B cell (primary cell): ENCODE measurements at regions of chr2 and their contacts with region 1.

Region 1: GRCh38 chr2:180334514-180334913 is 327.4 kb upstream of the CWC22 start:
- DNase-seq: peak; percentile 58
- ATAC-seq: peak; percentile 93
- H3K4me3 ChIP-seq: no peak overlapping the region
- H3K4me3 Mint-ChIP-seq: peak overlapping the region; percentile 36
- H3K27ac ChIP-seq: peak overlapping the region in 1 of 2 donors; percentile 50
- H3K27ac Mint-ChIP-seq: peak overlapping the region; percentile 78
- H3K4me1 ChIP-seq: peaks cover 8% of the 10 kb centered on the region in 2 donors
- H3K4me1 Mint-ChIP-seq: peaks cover 16% of the 10 kb centered on the region
- H3K27me3 ChIP-seq: no peaks in the 10 kb centered on the region
- H3K27me3 Mint-ChIP-seq: no peaks in the 10 kb centered on the region
- CTCF ChIP-seq: no peak

Region 2: GRCh38 chr2:180158961-180159360 is 175.6 kb before region 1 on chr2:
- CTCF ChIA-PET with region 1: no interaction called
- POLR2A ChIA-PET with region 1: no interaction called
- intact Hi-C with region 1: no loop called
- DNase-seq: no peak
- ATAC-seq: no peak
- H3K4me3 ChIP-seq: no peak overlapping the region
- H3K4me3 Mint-ChIP-seq: no peak overlapping the region
- H3K27ac ChIP-seq: no peak overlapping the region
- H3K27ac Mint-ChIP-seq: no peak overlapping the region
- H3K4me1 ChIP-seq: no peaks in the 10 kb centered on the region
- H3K4me1 Mint-ChIP-seq: no peaks in the 10 kb centered on the region
- H3K27me3 ChIP-seq: no peaks in the 10 kb centered on the region
- H3K27me3 Mint-ChIP-seq: peaks cover 6% of the 10 kb centered on the region
- CTCF ChIP-seq: no peak

Region 3: DNA sequence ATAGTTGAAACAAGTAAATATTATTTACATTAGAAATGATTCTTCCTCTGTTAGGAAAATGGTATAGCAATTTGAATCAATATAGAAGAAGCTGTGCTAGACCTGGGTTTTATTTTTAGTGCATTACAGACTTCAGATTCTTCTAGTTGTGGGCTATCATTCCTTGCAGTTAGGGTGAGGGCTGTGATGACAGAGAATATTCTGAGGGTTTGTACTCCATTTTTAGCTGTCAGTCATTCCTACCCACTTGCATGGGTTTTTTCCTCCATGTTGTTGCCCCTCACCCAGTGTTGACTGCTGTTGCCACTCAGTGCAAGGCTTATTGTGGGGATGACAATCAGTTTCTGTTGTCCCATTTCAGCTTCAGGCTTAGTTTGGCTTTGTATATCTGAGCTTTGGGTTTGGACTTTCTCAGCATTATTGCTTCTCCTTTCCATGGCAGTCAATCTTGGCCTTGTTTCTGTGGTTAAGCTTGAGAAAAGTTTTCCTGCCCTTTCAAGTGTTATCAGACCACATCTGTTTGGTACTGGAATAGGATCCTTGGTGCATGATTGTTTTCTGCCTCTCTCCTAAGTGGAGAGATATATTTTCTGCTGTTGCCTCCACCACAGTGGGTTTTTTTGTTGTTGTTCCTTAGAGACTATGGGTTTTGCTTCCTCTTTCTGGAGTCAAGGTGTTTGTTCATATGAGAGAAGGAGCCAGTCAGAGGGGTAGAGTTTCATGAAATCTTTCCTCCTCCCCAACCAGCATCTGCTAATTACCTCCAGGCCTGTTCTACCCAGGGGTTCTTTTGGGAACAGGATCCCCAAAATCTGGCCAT is 14.7 kb before region 1 on chr2:
- CTCF ChIA-PET with region 1: no interaction called
- POLR2A ChIA-PET with region 1: interaction called, 3 read pairs
- intact Hi-C with region 1: loop called (anchors 1 kb)
- DNase-seq: peak; percentile 48
- ATAC-seq: peak; percentile 90
- H3K4me3 ChIP-seq: no peak overlapping the region
- H3K4me3 Mint-ChIP-seq: peak overlapping the region; percentile 46
- H3K27ac ChIP-seq: peak overlapping the region in 1 of 2 donors; percentile 43
- H3K27ac Mint-ChIP-seq: peak overlapping the region; percentile 85
- H3K4me1 ChIP-seq: peaks cover 9% of the 10 kb centered on the region in 2 donors
- H3K4me1 Mint-ChIP-seq: peaks cover 14% of the 10 kb centered on the region
- H3K27me3 ChIP-seq: no peaks in the 10 kb centered on the region
- H3K27me3 Mint-ChIP-seq: no peaks in the 10 kb centered on the region
- CTCF ChIP-seq: no peak

Region 4: GRCh38 chr2:180405520-180405919 is 71.0 kb after region 1 on chr2:
- CTCF ChIA-PET with region 1: no interaction called
- POLR2A ChIA-PET with region 1: no interaction called
- intact Hi-C with region 1: no loop called
- DNase-seq: no peak
- ATAC-seq: no peak
- H3K4me3 ChIP-seq: no peak overlapping the region
- H3K4me3 Mint-ChIP-seq: no peak overlapping the region
- H3K27ac ChIP-seq: no peak overlapping the region
- H3K27ac Mint-ChIP-seq: no peak overlapping the region
- H3K4me1 ChIP-seq: no peaks in the 10 kb centered on the region
- H3K4me1 Mint-ChIP-seq: no peaks in the 10 kb centered on the region
- H3K27me3 ChIP-seq: no peaks in the 10 kb centered on the region
- H3K27me3 Mint-ChIP-seq: no peaks in the 10 kb centered on the region
- CTCF ChIP-seq: no peak

Region 5: GRCh38 chr2:180604077-180604476 is 269.6 kb after region 1 on chr2:
- CTCF ChIA-PET with region 1: no interaction called
- POLR2A ChIA-PET with region 1: no interaction called
- intact Hi-C with region 1: no loop called
- DNase-seq: peak; percentile 10
- ATAC-seq: no peak
- H3K4me3 ChIP-seq: no peak overlapping the region
- H3K4me3 Mint-ChIP-seq: no peak overlapping the region
- H3K27ac ChIP-seq: no peak overlapping the region
- H3K27ac Mint-ChIP-seq: no peak overlapping the region
- H3K4me1 ChIP-seq: no peaks in the 10 kb centered on the region
- H3K4me1 Mint-ChIP-seq: no peaks in the 10 kb centered on the region
- H3K27me3 ChIP-seq: no peaks in the 10 kb centered on the region
- H3K27me3 Mint-ChIP-seq: no peaks in the 10 kb centered on the region
- CTCF ChIP-seq: peak; percentile 34